SK-N-SH (cell line): ENCODE measurements at regions of chr3 and their contacts with region 1.

Region 1: DNA sequence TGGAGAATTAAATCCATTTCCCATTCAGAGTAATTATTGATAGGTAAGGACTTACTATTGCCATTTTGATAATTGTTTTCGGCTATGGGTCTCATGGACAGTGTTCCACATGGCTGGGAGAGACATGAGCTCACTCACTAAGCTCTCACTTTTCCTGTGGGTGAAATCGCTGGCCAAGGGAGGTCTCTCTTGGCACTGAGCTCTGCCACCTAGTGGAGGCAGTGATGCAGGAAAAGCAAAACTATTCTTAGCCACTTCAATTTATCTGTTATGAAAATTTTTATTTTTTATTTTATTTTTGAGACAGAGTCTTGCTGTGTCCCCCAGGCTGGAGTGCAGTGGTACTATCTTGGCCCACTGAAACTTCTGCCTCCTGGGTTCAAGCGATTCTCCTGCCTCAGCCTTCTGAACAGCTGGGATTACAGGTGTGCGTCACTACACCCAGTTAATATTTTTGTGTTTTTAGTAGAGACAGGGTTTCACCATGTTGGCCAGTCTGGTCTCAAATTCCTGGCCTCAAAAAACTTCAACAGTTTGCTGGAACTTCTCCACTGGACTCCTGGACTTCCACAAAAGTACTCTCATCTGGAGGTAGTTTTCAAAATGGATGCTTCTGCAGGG is 4.7 kb upstream of the RNF13 start:
- DNase-seq: peak; percentile 67
- H3K4me3 ChIP-seq: no peak overlapping the region
- H3K27ac ChIP-seq: no peak overlapping the region
- H3K4me1 ChIP-seq: peaks cover 4 to 8% of the 10 kb centered on the region in 2 experiments; a peak in 2 of 4 replicates
- H3K27me3 ChIP-seq: no peaks in the 10 kb centered on the region
- CTCF ChIP-seq: peak; percentile 93
- EP300 ChIP-seq: no peak
- RAD21 ChIP-seq: peak; percentile 69

Region 2: GRCh38 chr3:149234671-149235245 is 573.6 kb before region 1 on chr3:
- CTCF ChIA-PET with region 1: no interaction called
- POLR2A ChIA-PET with region 1: no interaction called
- DNase-seq: no peak
- H3K4me3 ChIP-seq: no peak overlapping the region
- H3K27ac ChIP-seq: no peak overlapping the region
- H3K4me1 ChIP-seq: peaks cover 0 to 2% of the 10 kb centered on the region in 2 experiments; a peak in 1 of 4 replicates
- H3K27me3 ChIP-seq: no peaks in the 10 kb centered on the region
- CTCF ChIP-seq: no peak
- EP300 ChIP-seq: no peak
- RAD21 ChIP-seq: no peak

Region 3: GRCh38 chr3:149752051-149752787 is 56.1 kb before region 1 on chr3 and contains the start of gene COMMD2:
- CTCF ChIA-PET with region 1: interaction called, 17 read pairs
- POLR2A ChIA-PET with region 1: interaction called, 6 read pairs
- DNase-seq: peak; percentile 82
- H3K4me3 ChIP-seq: peak within 1 kb of the TSS; percentile 96
- H3K27ac ChIP-seq: peak within 1 kb of the TSS; percentile 59 to 74; a peak in 3 of 4 replicates
- H3K4me1 ChIP-seq: peaks cover 0 to 5% of the 10 kb centered on the region in 2 experiments; a peak in 3 of 4 replicates
- H3K27me3 ChIP-seq: no peaks in the 10 kb centered on the region
- CTCF ChIP-seq: peak; percentile 53
- EP300 ChIP-seq: peak in 1 of 2 experiments; percentile 22; a peak in 1 of 4 replicates
- RAD21 ChIP-seq: peak; percentile 41
- polyA plus RNA-seq, gene COMMD2: 20.9 and 21.3 TPM in 2 replicates

Region 4: GRCh38 chr3:149771652-149772271 is 36.6 kb before region 1 on chr3:
- CTCF ChIA-PET with region 1: interaction called, 31 read pairs
- POLR2A ChIA-PET with region 1: no interaction called
- DNase-seq: peak; percentile 62
- H3K4me3 ChIP-seq: no peak overlapping the region
- H3K27ac ChIP-seq: no peak overlapping the region
- H3K4me1 ChIP-seq: no peaks in the 10 kb centered on the region
- H3K27me3 ChIP-seq: no peaks in the 10 kb centered on the region
- CTCF ChIP-seq: peak; percentile 86
- EP300 ChIP-seq: no peak
- RAD21 ChIP-seq: peak; percentile 66

Region 5: DNA sequence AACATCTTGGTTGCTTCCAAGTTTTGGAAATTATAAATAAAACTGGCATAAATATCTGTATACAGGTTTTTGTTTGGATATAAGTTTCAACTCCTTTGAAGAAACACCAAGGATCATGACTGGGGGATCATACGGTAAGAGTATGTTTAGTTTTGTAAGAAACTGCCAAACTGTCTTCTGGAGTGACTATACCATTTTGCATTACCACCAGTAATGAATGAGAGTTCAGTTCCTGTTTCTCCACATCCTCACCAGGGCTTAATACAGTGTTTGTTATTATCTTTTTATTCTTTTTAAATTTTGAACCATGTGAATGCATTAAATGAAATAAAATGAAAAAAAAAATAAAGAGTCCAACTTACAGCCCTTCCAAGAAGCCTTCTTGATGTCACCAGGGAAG is 12.3 kb before region 1 on chr3:
- CTCF ChIA-PET with region 1: interaction called, 11 read pairs
- POLR2A ChIA-PET with region 1: no interaction called
- DNase-seq: no peak
- H3K4me3 ChIP-seq: no peak overlapping the region
- H3K27ac ChIP-seq: no peak overlapping the region
- H3K4me1 ChIP-seq: no peaks in the 10 kb centered on the region
- H3K27me3 ChIP-seq: no peaks in the 10 kb centered on the region
- CTCF ChIP-seq: no peak
- EP300 ChIP-seq: no peak
- RAD21 ChIP-seq: no peak

Region 6: DNA sequence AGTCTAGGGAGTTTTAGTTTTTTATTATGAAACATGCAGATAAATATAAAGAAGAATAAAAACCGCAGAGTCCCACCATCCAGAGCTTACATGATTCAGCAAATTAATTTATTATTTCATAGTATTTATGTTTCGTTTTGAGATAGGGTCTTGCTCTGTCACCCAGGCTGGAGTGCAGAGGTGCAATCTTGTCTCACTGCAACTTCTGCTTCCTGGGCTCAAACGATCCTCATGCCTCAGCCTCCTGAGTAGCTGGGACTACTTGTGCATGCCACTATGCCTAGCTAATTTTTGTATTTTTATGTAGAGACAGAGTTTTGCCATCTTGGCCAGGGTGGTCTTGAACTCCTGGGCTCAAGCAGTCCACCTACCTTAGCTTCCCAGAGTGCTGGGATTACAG is 18.3 kb after region 1 on chr3:
- CTCF ChIA-PET with region 1: interaction called, 21 read pairs
- POLR2A ChIA-PET with region 1: no interaction called
- DNase-seq: no peak
- H3K4me3 ChIP-seq: no peak overlapping the region
- H3K27ac ChIP-seq: no peak overlapping the region
- H3K4me1 ChIP-seq: peaks cover 0 to 2% of the 10 kb centered on the region in 2 experiments; a peak in 1 of 4 replicates
- H3K27me3 ChIP-seq: no peaks in the 10 kb centered on the region
- CTCF ChIP-seq: no peak
- EP300 ChIP-seq: no peak
- RAD21 ChIP-seq: no peak

Region 7: GRCh38 chr3:149958171-149958796 is 150.0 kb after region 1 on chr3:
- CTCF ChIA-PET with region 1: no interaction called
- POLR2A ChIA-PET with region 1: no interaction called
- DNase-seq: no peak
- H3K4me3 ChIP-seq: no peak overlapping the region
- H3K27ac ChIP-seq: no peak overlapping the region
- H3K4me1 ChIP-seq: peaks cover 19 to 20% of the 10 kb centered on the region in 2 experiments; a peak in 3 of 4 replicates
- H3K27me3 ChIP-seq: no peaks in the 10 kb centered on the region
- CTCF ChIP-seq: no peak
- EP300 ChIP-seq: no peak
- RAD21 ChIP-seq: no peak